ENCODE measurements at regions of chr3 and their contacts with region 1.

Region 1: GRCh38 chr3:24237971-24238767 is 256.5 kb downstream of the THRB start:
- DNase-seq: no peak
- ATAC-seq: peak; percentile 80

Region 2: GRCh38 chr3:23778446-23778845 is 459.7 kb before region 1 on chr3:
- intact Hi-C with region 1: no loop called
- DNase-seq: no peak
- ATAC-seq: no peak

Region 3: DNA sequence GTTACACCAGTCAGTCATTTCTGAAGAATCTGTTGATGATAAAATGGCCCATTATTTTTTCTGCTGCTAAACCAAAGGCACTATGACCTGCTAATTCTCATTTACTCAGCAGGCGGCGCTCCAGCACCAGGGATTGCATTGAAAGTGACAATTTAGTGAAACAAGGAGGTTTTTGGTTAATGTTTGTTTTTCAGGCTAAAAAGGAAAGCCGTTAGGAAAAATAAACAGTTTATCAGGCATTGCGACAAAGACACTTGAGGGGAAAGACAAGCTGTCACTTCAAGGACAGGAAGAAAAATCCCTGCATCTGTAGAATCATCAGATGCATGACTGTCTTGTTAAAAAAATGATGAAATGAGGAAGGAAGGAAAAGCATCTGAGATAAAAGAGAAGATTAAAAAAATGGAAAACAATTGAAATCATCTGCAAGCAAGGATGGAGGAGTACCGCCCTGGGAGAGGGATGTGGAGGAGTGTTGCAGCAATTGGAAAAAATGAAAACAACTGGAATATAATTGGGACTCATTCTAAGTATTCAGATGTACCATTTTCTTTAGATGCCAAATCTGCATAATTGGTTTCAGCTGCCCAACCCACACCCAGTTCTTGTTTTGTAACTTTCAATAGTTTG is 239.0 kb before region 1 on chr3:
- intact Hi-C with region 1: loop called (anchors 5 kb)
- DNase-seq: peak; percentile 79
- ATAC-seq: peak; percentile 43

Region 4: DNA sequence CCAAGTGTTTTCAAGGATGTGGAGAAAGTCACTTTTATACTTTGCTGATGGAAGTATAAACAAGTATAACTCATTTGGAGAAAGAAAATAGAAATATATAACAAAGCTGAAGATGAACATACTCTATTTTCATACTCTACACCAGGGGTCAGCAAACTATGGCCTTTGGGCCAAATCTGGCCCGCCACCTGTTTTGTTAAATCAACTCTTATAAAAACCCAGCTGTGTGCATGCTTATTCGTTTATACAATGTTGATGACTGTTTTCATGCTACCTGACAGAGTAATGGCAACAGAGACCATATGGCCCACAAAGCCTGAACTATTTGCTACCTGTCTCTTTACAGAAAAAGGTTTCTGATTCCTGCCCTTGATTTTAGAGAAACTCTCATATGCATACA is 169.1 kb before region 1 on chr3:
- intact Hi-C with region 1: loop called (anchors 10 kb)
- DNase-seq: no peak
- ATAC-seq: no peak

Region 5: GRCh38 chr3:24168977-24169376 is 69.2 kb before region 1 on chr3:
- intact Hi-C with region 1: no loop called
- DNase-seq: no peak
- ATAC-seq: no peak

Measured in Right ventricle myocardium superior (tissue), 1 donor.